GM10248 (cell line): ENCODE measurements at regions of chr20 and their contacts with region 1.

Region 1: GRCh38 chr20:43666376-43667328 is at the start of gene MYBL2:
- DNase-seq: peak; percentile 92
- CTCF ChIP-seq: no peak

Region 2: DNA sequence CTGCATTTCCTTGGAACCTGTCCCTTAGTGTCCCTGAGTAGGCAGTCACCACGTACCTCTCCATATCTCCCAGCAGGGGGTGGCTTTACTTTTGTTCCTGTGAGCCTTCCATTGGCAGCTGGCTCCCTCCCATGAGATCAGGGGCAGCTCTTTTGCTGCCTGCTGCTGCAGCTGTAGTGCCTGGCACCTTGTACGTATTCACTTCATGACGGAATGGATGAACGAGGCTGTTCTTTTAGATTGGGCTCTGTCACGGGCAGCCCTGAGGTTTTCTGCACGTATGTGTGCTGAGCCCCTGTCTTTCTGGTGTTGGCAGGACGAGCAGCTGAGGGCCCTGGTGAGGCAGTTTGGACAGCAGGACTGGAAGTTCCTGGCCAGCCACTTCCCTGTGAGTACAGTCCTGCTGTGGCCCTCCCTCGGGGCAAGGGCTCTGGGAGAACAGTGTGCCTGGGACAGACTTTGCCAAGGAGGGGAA is 14.9 kb after region 1 on chr20:
- CTCF ChIA-PET with region 1: interaction called, 11 read pairs
- POLR2A ChIA-PET with region 1: interaction called, 7 read pairs
- DNase-seq: peak; percentile 31
- CTCF ChIP-seq: peak; percentile 8

Region 3: GRCh38 chr20:44123251-44123650 is 456.6 kb after region 1 on chr20:
- CTCF ChIA-PET with region 1: no interaction called
- POLR2A ChIA-PET with region 1: no interaction called
- DNase-seq: no peak
- CTCF ChIP-seq: no peak